ENCODE measurements at regions of chr5 and their contacts with region 1.

Region 1: GRCh38 chr5:141349917-141350619 is at the start of gene PCDHGB1:
- DNase-seq: peak in 3 of 10 donors; percentile 33 to 35 (median 33)

Region 2: GRCh38 chr5:141430332-141431113 is 80.5 kb after region 1 on chr5 and contains the start of gene PCDHGA12:
- intact Hi-C with region 1: loop called (anchors 2 kb)
- DNase-seq: peak in 1 of 10 donors; percentile 87

Measured in posterior cingulate gyrus (tissue), 11 donors.